Ovary (tissue), 10 donors: ENCODE measurements at regions of chr2 and their contacts with region 1.

Region 1: GRCh38 chr2:230254152-230254881 is 28.8 kb downstream of the SP140 start:
- DNase-seq: no peak
- H3K4me3 ChIP-seq: no peak overlapping the region
- H3K27ac ChIP-seq: no peak overlapping the region
- H3K4me1 ChIP-seq: no peaks in the 10 kb centered on the region
- H3K27me3 ChIP-seq: no peaks in the 10 kb centered on the region
- CTCF ChIP-seq: no peak
- EP300 ChIP-seq: no peak
- POLR2A ChIP-seq: no peak

Region 2: DNA sequence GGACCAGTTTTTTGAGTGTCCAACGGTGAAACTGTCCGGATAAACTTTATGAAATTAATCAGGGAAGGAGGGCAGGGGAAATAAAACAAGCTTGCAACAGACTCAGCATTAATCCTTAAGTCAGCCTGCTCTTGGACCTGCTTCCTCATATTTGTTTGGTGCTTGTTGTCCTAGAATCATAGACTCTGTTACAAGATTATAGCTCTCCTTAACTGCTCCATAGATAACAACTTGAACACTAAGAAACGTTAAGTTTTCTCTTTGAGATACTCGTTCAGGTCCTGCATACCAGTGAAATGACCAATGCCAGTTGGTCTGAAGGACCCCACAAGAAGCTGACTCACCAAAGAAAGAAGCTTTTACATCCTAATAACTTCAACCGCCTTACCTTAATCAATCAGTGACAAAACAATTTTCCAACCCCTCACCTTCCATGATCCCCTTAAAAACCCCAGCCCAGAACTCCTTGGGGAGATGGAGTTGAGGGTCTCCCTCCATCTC is 1476.4 kb before region 1 on chr2:
- intact Hi-C with region 1: no loop called
- DNase-seq: no peak
- H3K4me3 ChIP-seq: no peak overlapping the region
- H3K27ac ChIP-seq: no peak overlapping the region
- H3K4me1 ChIP-seq: no peaks in the 10 kb centered on the region
- H3K27me3 ChIP-seq: no peaks in the 10 kb centered on the region
- CTCF ChIP-seq: no peak
- EP300 ChIP-seq: no peak
- POLR2A ChIP-seq: no peak

Region 3: GRCh38 chr2:230218421-230218820 is 35.9 kb before region 1 on chr2:
- intact Hi-C with region 1: loop called in 1 of 4 experiments (anchors 1 kb)
- DNase-seq: no peak
- H3K4me3 ChIP-seq: no peak overlapping the region
- H3K27ac ChIP-seq: no peak overlapping the region
- H3K4me1 ChIP-seq: peaks cover 6% of the 10 kb centered on the region
- H3K27me3 ChIP-seq: no peaks in the 10 kb centered on the region
- CTCF ChIP-seq: no peak
- EP300 ChIP-seq: no peak
- POLR2A ChIP-seq: no peak